ENCODE measurements at regions of chr10 and their contacts with region 1.

Region 1: DNA sequence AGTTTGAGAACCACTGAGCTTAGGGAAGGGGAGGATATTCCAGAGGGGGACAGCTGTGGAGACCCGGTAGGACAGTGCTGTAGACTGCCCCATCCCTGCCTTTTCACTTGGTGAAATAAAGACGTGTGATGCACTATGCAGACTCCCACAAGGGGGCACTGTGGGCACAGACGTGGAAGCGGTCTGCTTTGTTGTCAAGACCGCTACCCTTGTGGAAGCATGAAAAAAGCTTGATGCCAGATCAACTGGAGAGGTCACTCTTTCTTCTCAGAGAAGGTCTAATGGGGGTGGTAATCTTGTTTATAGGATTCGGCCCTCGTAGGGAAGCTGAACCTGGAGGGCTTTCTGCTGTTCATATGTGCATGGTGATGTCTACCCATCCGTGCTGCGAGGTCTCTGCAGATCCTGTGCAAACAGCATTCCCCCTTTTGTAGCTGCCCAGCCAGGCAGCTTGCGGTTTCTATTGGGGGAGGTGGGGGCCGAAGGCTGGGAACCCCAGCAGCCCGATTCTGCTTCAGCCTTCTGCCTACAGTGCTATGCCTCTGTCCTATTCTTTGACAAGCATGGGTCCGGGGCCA is 13.7 kb downstream of the RPS24 start:
- DNase-seq: peak; percentile 91
- ATAC-seq: peak; percentile 81
- H3K4me3 Mint-ChIP-seq: no peak overlapping the region
- H3K27ac Mint-ChIP-seq: no peak overlapping the region
- H3K4me1 Mint-ChIP-seq: peaks cover 23% of the 10 kb centered on the region
- H3K27me3 Mint-ChIP-seq: no peaks in the 10 kb centered on the region

Region 2: DNA sequence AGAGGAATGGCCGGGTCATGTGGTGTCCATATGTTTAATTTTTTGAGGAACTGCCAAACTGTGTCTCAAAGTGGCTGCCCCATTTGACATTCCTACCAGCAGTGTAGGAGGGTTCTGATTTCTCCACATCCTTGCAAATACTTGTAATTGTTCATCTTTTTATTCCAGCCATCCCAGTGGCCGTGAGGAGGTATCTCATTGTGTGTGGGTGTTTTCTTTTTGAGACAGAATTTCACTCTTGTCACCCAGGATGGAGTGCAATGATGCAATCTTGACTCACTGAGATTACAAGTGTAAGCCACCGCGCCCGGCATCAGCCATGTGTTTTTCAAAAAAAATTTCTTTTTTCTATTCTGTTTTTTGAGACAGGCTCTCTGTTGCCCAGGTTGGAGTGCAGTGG is 82.1 kb before region 1 on chr10:
- CTCF ChIA-PET with region 1: no interaction called
- POLR2A ChIA-PET with region 1: no interaction called
- intact Hi-C with region 1: no loop called
- DNase-seq: peak; percentile 55
- ATAC-seq: peak; percentile 67
- H3K4me3 Mint-ChIP-seq: no peak overlapping the region
- H3K27ac Mint-ChIP-seq: no peak overlapping the region
- H3K4me1 Mint-ChIP-seq: peaks cover 7% of the 10 kb centered on the region
- H3K27me3 Mint-ChIP-seq: no peaks in the 10 kb centered on the region

Region 3: GRCh38 chr10:78035025-78035424 is 12.4 kb before region 1 on chr10:
- CTCF ChIA-PET with region 1: interaction called, 11 read pairs
- POLR2A ChIA-PET with region 1: interaction called, 3 read pairs
- intact Hi-C with region 1: no loop called
- DNase-seq: no peak
- ATAC-seq: no peak
- H3K4me3 Mint-ChIP-seq: peak overlapping the region; percentile 88
- H3K27ac Mint-ChIP-seq: peak overlapping the region; percentile 92
- H3K4me1 Mint-ChIP-seq: peaks cover 51% of the 10 kb centered on the region
- H3K27me3 Mint-ChIP-seq: no peaks in the 10 kb centered on the region

Region 4: GRCh38 chr10:78437998-78438906 is 390.8 kb after region 1 on chr10:
- CTCF ChIA-PET with region 1: no interaction called
- POLR2A ChIA-PET with region 1: no interaction called
- intact Hi-C with region 1: loop called in 1 of 2 experiments (anchors 2 kb)
- DNase-seq: peak; percentile 43
- ATAC-seq: peak; percentile 44
- H3K4me3 Mint-ChIP-seq: no peak overlapping the region
- H3K27ac Mint-ChIP-seq: no peak overlapping the region
- H3K4me1 Mint-ChIP-seq: no peaks in the 10 kb centered on the region
- H3K27me3 Mint-ChIP-seq: peaks cover 4% of the 10 kb centered on the region

Region 5: DNA sequence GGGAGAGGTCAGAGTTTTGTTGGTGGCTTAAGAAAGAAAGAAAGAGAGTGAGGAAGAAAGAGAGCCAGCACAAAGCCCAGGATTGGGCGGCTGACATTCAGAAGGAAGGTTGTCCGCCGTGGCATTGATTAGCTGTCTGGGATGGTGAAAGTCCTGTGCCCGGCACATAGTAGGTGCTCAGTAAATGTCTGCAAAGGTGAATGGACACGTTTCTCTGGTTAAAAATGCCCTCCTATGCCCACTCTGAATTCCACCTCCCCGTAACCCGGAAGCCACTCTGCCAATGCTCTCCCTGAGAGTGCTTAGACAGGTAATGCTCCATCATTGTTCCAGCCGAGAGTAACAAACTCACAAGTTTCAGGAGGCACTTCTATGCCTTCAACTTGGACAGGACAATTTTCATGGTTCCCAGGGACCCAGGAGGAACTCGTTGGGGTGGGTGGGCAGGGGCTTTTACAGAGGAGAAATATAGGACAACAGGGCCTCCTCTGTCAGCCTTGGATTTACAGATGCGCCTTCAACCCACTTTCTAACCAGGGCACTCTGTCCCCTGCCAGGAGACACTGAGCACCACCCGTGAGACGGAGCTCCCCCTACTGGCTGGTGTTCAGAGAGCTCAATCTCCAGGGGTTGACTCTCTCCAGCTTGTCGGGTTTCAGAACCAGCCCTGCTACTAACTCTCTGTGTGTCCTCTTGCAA is 609.9 kb after region 1 on chr10:
- CTCF ChIA-PET with region 1: interaction called, 5 read pairs
- POLR2A ChIA-PET with region 1: no interaction called
- intact Hi-C with region 1: loop called (anchors 1 to 2 kb)
- DNase-seq: peak; percentile 86
- ATAC-seq: peak; percentile 86
- H3K4me3 Mint-ChIP-seq: no peak overlapping the region
- H3K27ac Mint-ChIP-seq: no peak overlapping the region
- H3K4me1 Mint-ChIP-seq: no peaks in the 10 kb centered on the region
- H3K27me3 Mint-ChIP-seq: peaks cover 16% of the 10 kb centered on the region

Region 6: DNA sequence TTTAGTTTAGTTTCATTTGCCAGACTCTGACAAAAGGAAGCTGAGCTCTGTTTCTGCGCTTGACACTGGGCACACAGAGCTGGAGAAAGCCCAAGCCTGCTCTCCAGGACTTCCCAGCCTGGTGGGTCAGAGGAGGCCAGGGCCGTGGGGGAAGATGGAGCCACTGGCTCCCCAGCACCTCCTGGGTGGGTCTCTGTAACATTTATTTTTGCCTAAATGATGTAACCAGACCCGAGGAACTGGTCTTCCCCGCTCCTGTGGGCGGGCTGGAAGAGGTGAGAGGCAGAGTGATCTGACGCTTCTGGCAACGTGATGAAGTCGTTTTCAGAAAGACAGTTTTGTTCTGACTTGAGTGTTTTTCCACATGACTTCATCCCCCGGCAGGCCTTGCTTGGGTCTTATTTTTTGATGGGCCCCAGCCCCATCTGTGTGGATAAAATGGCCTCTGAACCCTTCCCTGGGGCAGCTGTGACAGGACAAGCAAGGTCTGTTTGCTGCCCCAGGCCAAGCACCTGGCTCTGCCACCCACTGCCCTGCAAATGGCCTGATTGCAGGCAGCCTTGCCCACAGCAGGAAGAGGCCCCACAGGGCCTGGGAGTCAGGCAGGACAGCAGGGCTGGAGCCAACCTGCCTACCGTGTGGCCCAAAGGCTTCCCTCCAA is 716.4 kb after region 1 on chr10:
- CTCF ChIA-PET with region 1: no interaction called
- POLR2A ChIA-PET with region 1: no interaction called
- intact Hi-C with region 1: loop called in 1 of 2 experiments (anchors 10 kb)
- DNase-seq: peak; percentile 85
- ATAC-seq: peak; percentile 88
- H3K4me3 Mint-ChIP-seq: no peak overlapping the region
- H3K27ac Mint-ChIP-seq: peak overlapping the region; percentile 91
- H3K4me1 Mint-ChIP-seq: peaks cover 21% of the 10 kb centered on the region
- H3K27me3 Mint-ChIP-seq: no peaks in the 10 kb centered on the region